ENCODE measurements at regions of chr2 and their contacts with region 1.

Region 1: GRCh38 chr2:218852911-218853667 is 6.5 kb upstream of the WNT6 start:
- DNase-seq: peak; percentile 62 to 91
- H3K4me3 ChIP-seq: peak overlapping the region in 1 of 4 experiments; percentile 17; a peak in 1 of 8 replicates
- H3K27ac ChIP-seq: no peak overlapping the region
- H3K4me1 ChIP-seq: peaks cover 13 to 30% (median 17%) of the 10 kb centered on the region in 4 experiments
- H3K27me3 ChIP-seq: peaks cover 49 to 58% (median 52%) of the 10 kb centered on the region in 4 experiments
- CTCF ChIP-seq: peak; percentile 74 to 93 (median 84)
- EP300 ChIP-seq: no peak
- POLR2A ChIP-seq: no peak
- RAD21 ChIP-seq: peak; percentile 93 to 94

Region 2: GRCh38 chr2:218701806-218702205 is 151.3 kb before region 1 on chr2:
- CTCF ChIA-PET with region 1: interaction called, 10 read pairs
- POLR2A ChIA-PET with region 1: no interaction called
- DNase-seq: no peak
- H3K4me3 ChIP-seq: no peak overlapping the region
- H3K27ac ChIP-seq: no peak overlapping the region
- H3K4me1 ChIP-seq: no peaks in the 10 kb centered on the region
- H3K27me3 ChIP-seq: no peaks in the 10 kb centered on the region
- CTCF ChIP-seq: no peak
- EP300 ChIP-seq: no peak
- POLR2A ChIP-seq: no peak
- RAD21 ChIP-seq: no peak

Region 3: GRCh38 chr2:218733171-218734021 is 119.7 kb before region 1 on chr2:
- CTCF ChIA-PET with region 1: interaction called, 83 read pairs
- POLR2A ChIA-PET with region 1: interaction called, 4 read pairs
- DNase-seq: no peak
- H3K4me3 ChIP-seq: no peak overlapping the region
- H3K27ac ChIP-seq: no peak overlapping the region
- H3K4me1 ChIP-seq: peaks cover 0 to 17% (median 6%) of the 10 kb centered on the region in 4 experiments; a peak in 5 of 7 replicates
- H3K27me3 ChIP-seq: no peaks in the 10 kb centered on the region
- CTCF ChIP-seq: no peak
- EP300 ChIP-seq: no peak
- POLR2A ChIP-seq: no peak
- RAD21 ChIP-seq: no peak

Region 4: GRCh38 chr2:218796691-218797090 is 56.4 kb before region 1 on chr2:
- CTCF ChIA-PET with region 1: interaction called, 12 read pairs
- POLR2A ChIA-PET with region 1: no interaction called
- DNase-seq: no peak
- H3K4me3 ChIP-seq: no peak overlapping the region
- H3K27ac ChIP-seq: no peak overlapping the region
- H3K4me1 ChIP-seq: peaks cover 0 to 10% (median 1%) of the 10 kb centered on the region in 4 experiments; a peak in 3 of 7 replicates
- H3K27me3 ChIP-seq: no peaks in the 10 kb centered on the region
- CTCF ChIP-seq: no peak
- EP300 ChIP-seq: no peak
- POLR2A ChIP-seq: no peak
- RAD21 ChIP-seq: no peak

Region 5: GRCh38 chr2:218876562-218877219 is 23.6 kb after region 1 on chr2:
- CTCF ChIA-PET with region 1: interaction called, 93 read pairs
- POLR2A ChIA-PET with region 1: no interaction called
- DNase-seq: peak in 1 of 2 experiments; percentile 90
- H3K4me3 ChIP-seq: no peak overlapping the region
- H3K27ac ChIP-seq: no peak overlapping the region
- H3K4me1 ChIP-seq: peaks cover 0 to 42% (median 27%) of the 10 kb centered on the region in 4 experiments; a peak in 6 of 7 replicates
- H3K27me3 ChIP-seq: peaks cover 97 to 100% (median 99%) of the 10 kb centered on the region in 4 experiments
- CTCF ChIP-seq: peak in 2 of 3 experiments; percentile 94 to 96; a peak in 3 of 4 replicates
- EP300 ChIP-seq: no peak
- POLR2A ChIP-seq: no peak
- RAD21 ChIP-seq: peak; percentile 90 to 97

Region 6: DNA sequence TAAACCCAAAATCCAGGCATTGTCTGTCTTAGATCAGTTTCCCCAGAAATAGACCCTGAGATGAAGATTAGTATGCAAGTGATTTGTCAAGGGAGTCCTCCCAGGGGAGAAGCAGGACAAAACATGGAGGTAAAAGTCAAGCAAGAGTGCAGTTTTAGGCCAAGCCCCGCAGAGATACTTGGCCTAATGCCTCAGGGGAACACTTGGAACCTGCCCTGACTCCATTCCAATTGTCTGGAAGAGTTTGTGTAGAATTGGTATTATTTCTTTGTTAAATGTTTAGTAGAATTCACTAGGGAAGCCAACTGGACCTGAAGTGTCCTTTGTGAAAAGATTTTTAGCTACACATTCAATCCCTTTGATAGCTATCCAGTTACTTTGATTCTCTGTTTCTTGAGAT is 61.9 kb after region 1 on chr2:
- CTCF ChIA-PET with region 1: no interaction called
- POLR2A ChIA-PET with region 1: no interaction called
- DNase-seq: no peak
- H3K4me3 ChIP-seq: no peak overlapping the region
- H3K27ac ChIP-seq: no peak overlapping the region
- H3K4me1 ChIP-seq: no peaks in the 10 kb centered on the region
- H3K27me3 ChIP-seq: no peaks in the 10 kb centered on the region
- CTCF ChIP-seq: no peak
- EP300 ChIP-seq: no peak
- POLR2A ChIP-seq: no peak
- RAD21 ChIP-seq: no peak

Region 7: DNA sequence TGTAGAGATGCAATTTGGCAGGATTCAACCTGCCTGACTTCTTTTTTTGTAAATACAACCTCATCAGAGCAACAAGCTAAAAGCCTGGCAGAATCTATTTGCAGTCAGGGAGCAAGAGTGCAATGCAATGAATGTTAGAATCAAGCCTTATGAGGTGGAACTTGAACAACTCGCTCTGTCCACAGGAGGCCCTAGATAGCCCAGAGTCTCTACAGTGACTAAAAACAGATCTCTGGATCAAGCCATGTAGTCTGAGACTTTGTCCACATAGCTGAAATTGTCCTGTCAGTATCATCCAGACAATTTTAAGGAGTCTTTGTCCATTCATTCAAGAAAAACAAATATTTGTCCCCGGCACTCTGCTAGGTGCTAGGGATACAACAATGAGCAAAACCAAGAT is 74.3 kb after region 1 on chr2:
- CTCF ChIA-PET with region 1: no interaction called
- POLR2A ChIA-PET with region 1: no interaction called
- DNase-seq: no peak
- H3K4me3 ChIP-seq: no peak overlapping the region
- H3K27ac ChIP-seq: no peak overlapping the region
- H3K4me1 ChIP-seq: no peaks in the 10 kb centered on the region
- H3K27me3 ChIP-seq: no peaks in the 10 kb centered on the region
- CTCF ChIP-seq: no peak
- EP300 ChIP-seq: no peak
- POLR2A ChIP-seq: no peak
- RAD21 ChIP-seq: no peak

Region 8: GRCh38 chr2:218944759-218945404 is 91.8 kb after region 1 on chr2:
- CTCF ChIA-PET with region 1: no interaction called
- POLR2A ChIA-PET with region 1: no interaction called
- DNase-seq: no peak
- H3K4me3 ChIP-seq: no peak overlapping the region
- H3K27ac ChIP-seq: no peak overlapping the region
- H3K4me1 ChIP-seq: no peaks in the 10 kb centered on the region
- H3K27me3 ChIP-seq: no peaks in the 10 kb centered on the region; a peak in 2 of 7 replicates
- CTCF ChIP-seq: no peak
- EP300 ChIP-seq: no peak
- POLR2A ChIP-seq: no peak
- RAD21 ChIP-seq: no peak

Region 9: GRCh38 chr2:218979846-218980734 is 127.0 kb after region 1 on chr2:
- CTCF ChIA-PET with region 1: interaction called, 28 read pairs
- POLR2A ChIA-PET with region 1: no interaction called
- DNase-seq: peak in 1 of 2 experiments; percentile 97
- H3K4me3 ChIP-seq: peak overlapping the region in 2 of 4 experiments; percentile 12 to 48; a peak in 4 of 8 replicates
- H3K27ac ChIP-seq: no peak overlapping the region
- H3K4me1 ChIP-seq: peaks cover 0 to 25% (median 19%) of the 10 kb centered on the region in 4 experiments; a peak in 6 of 7 replicates
- H3K27me3 ChIP-seq: peaks cover 54 to 95% (median 79%) of the 10 kb centered on the region in 4 experiments
- CTCF ChIP-seq: peak in 2 of 3 experiments; percentile 94; a peak in 3 of 4 replicates
- EP300 ChIP-seq: no peak; a peak in 1 of 3 replicates
- POLR2A ChIP-seq: no peak
- RAD21 ChIP-seq: peak; percentile 79 to 83